Activated CD4-positive, alpha-beta T cell treated with anti-CD3 and anti-CD28 coated beads, Interleukin-2, amount 10 ng/mL, durations not matched to agents 24 days and 14 days (primary cell): ENCODE measurements at regions of chr16 and their contacts with region 1.

Region 1: GRCh38 chr16:85986931-85987749 is 88.2 kb downstream of the IRF8 start:
- DNase-seq: peak; percentile 78
- H3K4me3 Mint-ChIP-seq: peak overlapping the region; percentile 42
- H3K27ac Mint-ChIP-seq: peak overlapping the region; percentile 85
- H3K4me1 Mint-ChIP-seq: peaks cover 59% of the 10 kb centered on the region
- H3K27me3 Mint-ChIP-seq: no peaks in the 10 kb centered on the region

Region 2: DNA sequence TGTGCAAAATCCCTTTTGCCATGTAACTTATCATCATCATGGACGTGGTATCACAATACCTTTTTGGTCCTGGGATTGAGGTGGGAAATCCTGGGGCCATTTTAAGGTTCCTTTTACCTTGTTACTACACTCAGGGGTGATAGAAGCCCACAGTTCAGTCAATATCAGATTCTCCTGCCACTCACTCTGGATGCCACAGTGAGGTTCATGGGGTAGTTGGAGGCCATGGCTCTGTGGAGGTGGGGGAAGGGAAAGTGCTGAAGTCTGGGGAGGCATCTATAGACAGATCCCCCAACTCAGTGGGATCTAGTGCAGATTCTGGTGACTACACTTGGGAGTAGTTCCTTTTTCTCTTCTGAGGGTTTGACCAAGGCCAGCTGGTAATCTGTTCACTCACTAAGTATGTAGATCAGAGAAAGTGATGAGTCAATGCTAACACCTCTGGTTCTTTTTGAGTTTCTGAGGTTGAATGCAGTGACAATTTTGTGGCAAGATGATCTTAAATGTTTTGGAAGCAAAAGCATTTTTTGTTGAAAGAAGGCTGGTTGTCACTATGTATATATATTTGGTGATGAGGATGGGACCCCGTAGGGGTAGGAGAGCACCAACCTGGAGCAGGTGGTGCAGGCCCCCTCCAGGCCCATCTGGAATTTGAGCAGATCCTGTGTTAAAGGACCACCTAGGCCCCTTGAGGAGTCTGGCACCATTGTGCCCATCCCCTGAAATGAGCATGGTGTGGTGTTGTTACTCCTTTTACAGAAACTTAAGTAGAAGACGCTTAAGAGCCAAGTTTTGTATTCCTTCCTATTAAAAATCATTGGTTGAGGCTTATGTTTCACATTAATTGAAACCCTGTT is 106.9 kb before region 1 on chr16:
- intact Hi-C with region 1: loop called (anchors 1 kb)
- DNase-seq: no peak
- H3K4me3 Mint-ChIP-seq: peak overlapping the region; percentile 4
- H3K27ac Mint-ChIP-seq: peak overlapping the region; percentile 63
- H3K4me1 Mint-ChIP-seq: peaks cover 33% of the 10 kb centered on the region
- H3K27me3 Mint-ChIP-seq: peaks cover 61% of the 10 kb centered on the region

Region 3: DNA sequence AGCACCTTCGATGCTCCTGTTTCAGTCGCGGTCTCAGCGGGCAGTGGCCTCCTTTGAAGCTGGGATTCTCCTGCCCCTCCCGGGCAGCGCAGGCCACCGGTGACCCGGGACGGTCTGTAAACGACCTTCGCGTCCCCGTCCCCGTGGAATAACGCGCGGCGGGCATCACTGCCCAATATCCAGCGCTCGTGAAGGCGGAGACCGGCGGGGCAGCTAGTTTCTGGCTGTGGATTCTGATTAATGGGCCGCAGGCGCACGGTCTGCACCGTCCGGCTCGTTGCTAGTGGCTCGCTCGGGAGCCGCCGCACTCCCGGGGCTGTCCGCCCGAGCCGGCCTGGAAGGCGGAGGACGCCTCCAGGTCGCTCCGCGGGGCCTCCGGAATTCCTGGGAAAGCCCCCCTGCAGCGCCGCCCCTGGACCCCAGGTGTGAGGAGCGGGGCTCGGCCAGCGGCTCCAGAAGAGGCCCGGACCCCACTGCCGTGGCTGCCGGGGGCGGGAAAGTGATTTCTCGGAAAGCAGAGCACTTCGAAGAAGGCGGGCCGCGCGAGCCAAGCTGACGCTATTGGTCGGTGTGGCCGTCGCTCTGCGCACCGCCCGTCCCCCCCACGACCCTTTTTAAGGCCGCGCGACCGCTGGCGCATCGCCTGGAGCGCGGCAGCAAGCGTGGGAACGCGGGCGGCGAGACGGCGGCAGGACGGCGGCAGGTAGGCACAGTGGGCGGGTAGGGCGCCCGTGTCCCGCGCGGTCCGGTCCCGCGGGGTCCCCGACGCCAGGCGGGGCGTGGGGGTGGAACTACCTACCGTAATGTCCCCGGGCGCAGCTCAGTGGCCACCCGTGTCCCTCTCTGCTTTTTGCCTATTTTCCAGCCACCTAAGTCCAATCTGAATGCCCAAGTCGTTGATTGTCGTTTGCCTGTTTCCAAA is 88.4 kb before region 1 on chr16 and contains the start of gene IRF8:
- intact Hi-C with region 1: loop called (anchors 1 kb)
- DNase-seq: peak; percentile 93
- H3K4me3 Mint-ChIP-seq: peak within 1 kb of the TSS; percentile 83
- H3K27ac Mint-ChIP-seq: peak within 1 kb of the TSS; percentile 80
- H3K4me1 Mint-ChIP-seq: peaks cover 50% of the 10 kb centered on the region
- H3K27me3 Mint-ChIP-seq: peaks cover 19% of the 10 kb centered on the region
- total RNA-seq, gene IRF8: 235 and 248 TPM in 2 replicates

Region 4: DNA sequence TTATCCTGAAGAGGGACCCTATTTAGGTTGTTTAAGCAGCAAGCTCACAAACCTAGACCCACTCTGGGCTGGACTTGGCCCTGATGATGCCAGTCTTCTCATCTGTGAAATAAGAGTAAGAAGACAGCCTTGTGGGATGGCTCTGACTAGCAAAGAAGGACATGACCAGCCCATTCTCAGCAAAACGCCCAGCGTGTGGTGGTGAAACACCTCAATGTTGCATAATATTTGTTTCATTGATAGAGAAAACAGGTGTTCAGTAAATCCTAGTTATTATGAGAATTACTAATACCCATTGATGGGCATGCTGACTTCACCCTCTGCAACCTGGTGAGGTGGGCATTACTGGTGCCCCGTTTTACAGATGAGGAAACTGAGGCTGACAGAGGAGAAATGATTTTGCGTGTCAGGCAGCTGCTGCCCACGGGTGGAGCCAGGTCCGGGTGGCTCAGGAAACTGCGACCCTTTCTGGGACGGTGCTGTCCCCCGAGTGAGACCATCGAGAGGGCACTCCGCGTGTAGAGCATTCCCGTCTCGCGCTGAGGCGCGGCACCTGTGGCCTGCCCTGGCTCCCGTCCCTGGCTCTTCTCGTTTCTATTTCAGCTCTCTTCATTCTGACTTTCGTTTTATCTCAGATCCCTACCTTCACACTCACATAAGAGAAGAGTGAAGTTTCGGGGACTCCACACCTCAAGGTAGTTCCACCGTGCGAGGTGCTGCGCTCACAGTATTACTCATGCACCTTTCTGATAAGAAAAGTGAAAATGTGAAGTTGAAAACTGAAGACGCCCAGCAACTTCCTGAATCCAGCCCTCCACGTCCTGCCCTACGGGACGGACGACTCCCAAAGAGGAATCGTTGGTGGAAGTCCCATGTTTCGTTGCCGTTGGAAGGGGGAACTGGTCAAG is 39.7 kb before region 1 on chr16:
- intact Hi-C with region 1: loop called (anchors 2 kb)
- DNase-seq: peak; percentile 76
- H3K4me3 Mint-ChIP-seq: peak overlapping the region; percentile 73
- H3K27ac Mint-ChIP-seq: peak overlapping the region; percentile 62
- H3K4me1 Mint-ChIP-seq: peaks cover 56% of the 10 kb centered on the region
- H3K27me3 Mint-ChIP-seq: peaks cover 3% of the 10 kb centered on the region

Region 5: GRCh38 chr16:86007524-86007923 is 20.4 kb after region 1 on chr16:
- intact Hi-C with region 1: loop called (anchors 1 kb)
- DNase-seq: no peak
- H3K4me3 Mint-ChIP-seq: peak overlapping the region; percentile 8
- H3K27ac Mint-ChIP-seq: peak overlapping the region; percentile 48
- H3K4me1 Mint-ChIP-seq: peaks cover 14% of the 10 kb centered on the region
- H3K27me3 Mint-ChIP-seq: peaks cover 5% of the 10 kb centered on the region